ENCODE measurements at regions of chr19 and their contacts with region 1.

Region 1: DNA sequence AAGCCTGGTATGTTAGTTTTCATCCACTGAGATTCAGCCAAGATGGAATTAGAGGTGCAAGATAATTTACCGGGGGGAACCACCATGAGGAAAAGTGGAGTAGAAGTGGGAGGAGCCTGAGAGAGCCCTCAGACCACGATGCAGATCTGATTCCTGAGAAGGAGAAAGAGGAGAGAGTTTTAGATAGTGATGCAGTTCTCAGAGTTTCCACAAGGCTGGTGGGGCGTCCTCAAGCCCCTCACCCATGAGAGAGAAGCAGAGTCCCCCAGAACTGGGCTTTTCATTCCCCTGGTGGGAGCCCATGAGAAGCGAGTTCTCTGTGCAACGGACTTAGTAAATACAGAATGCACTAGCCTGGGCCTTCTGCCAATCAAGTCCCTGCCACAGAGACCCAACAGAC is 18.1 kb downstream of the CEACAM5 start:
- DNase-seq: no peak
- ATAC-seq: no peak
- H3K4me3 ChIP-seq: no peak overlapping the region
- H3K4me3 Mint-ChIP-seq: no peak overlapping the region
- H3K27ac ChIP-seq: no peak overlapping the region
- H3K27ac Mint-ChIP-seq: no peak overlapping the region
- H3K4me1 ChIP-seq: no peaks in the 10 kb centered on the region
- H3K4me1 Mint-ChIP-seq: no peaks in the 10 kb centered on the region
- H3K27me3 ChIP-seq: peaks cover 1 to 19% of the 10 kb centered on the region in 2 experiments
- H3K27me3 Mint-ChIP-seq: peaks cover 60% of the 10 kb centered on the region
- CTCF ChIP-seq: no peak

Region 2: DNA sequence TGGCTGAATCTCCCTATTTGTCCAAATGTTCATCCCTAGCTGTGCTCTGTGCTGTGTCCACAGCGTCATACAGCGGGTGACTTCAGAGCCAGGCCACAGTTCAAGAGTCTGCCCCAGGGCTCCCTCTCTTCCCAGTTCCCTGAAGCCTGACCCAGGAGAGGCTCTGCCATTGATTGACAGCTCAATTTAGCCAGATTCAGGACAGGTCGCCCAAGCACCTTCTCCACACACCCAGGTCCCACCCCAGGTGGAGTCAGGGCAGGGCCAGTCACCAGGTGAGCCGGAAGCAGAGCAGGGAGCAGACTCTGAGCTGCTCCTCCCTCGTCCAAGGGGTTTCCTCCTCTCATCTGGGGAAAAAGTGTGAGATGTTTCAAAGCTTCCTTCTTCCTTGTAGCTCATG is 44.1 kb before region 1 on chr19:
- CTCF ChIA-PET with region 1: no interaction called
- POLR2A ChIA-PET with region 1: no interaction called
- intact Hi-C with region 1: no loop called
- DNase-seq: no peak
- ATAC-seq: no peak
- H3K4me3 ChIP-seq: no peak overlapping the region
- H3K4me3 Mint-ChIP-seq: no peak overlapping the region
- H3K27ac ChIP-seq: no peak overlapping the region
- H3K27ac Mint-ChIP-seq: no peak overlapping the region
- H3K4me1 ChIP-seq: no peaks in the 10 kb centered on the region
- H3K4me1 Mint-ChIP-seq: no peaks in the 10 kb centered on the region
- H3K27me3 ChIP-seq: peaks cover 4 to 20% of the 10 kb centered on the region in 2 experiments
- H3K27me3 Mint-ChIP-seq: peaks cover 82% of the 10 kb centered on the region
- CTCF ChIP-seq: no peak

Region 3: GRCh38 chr19:42003506-42004294 is 277.2 kb after region 1 on chr19:
- CTCF ChIA-PET with region 1: no interaction called
- POLR2A ChIA-PET with region 1: no interaction called
- intact Hi-C with region 1: loop called in 1 of 2 experiments (anchors 10 kb)
- DNase-seq: no peak
- ATAC-seq: no peak
- H3K4me3 ChIP-seq: no peak overlapping the region
- H3K4me3 Mint-ChIP-seq: no peak overlapping the region
- H3K27ac ChIP-seq: no peak overlapping the region
- H3K27ac Mint-ChIP-seq: no peak overlapping the region
- H3K4me1 ChIP-seq: no peaks in the 10 kb centered on the region
- H3K4me1 Mint-ChIP-seq: no peaks in the 10 kb centered on the region
- H3K27me3 ChIP-seq: peaks cover 13 to 34% of the 10 kb centered on the region in 2 experiments
- H3K27me3 Mint-ChIP-seq: peaks cover 56% of the 10 kb centered on the region
- CTCF ChIP-seq: no peak

Measured in CD4-positive, alpha-beta T cell (primary cell).